Activated T-helper 1 cell treated with anti-CD3 and anti-CD28 coated beads, Interleukin-12 subunit alpha, Interleukin-12 subunit beta, Interleukin-2, Interleukin-4 antibody, amounts not matched to agents 30 ng/mL and 10 ng/mL and 1 ng/mL, durations not matched to agents 14 hours and 24 hours and 36 hours (primary cell): ENCODE measurements at regions of chrX and their contacts with region 1.

Region 1: GRCh38 chrX:124388562-124388961 is 42.2 kb downstream of the SH2D1A start:
- DNase-seq: peak; percentile 23
- H3K4me3 Mint-ChIP-seq: no peak overlapping the region
- H3K27ac Mint-ChIP-seq: no peak overlapping the region
- H3K4me1 Mint-ChIP-seq: peaks cover 5% of the 10 kb centered on the region
- H3K27me3 Mint-ChIP-seq: no peaks in the 10 kb centered on the region

Region 2: DNA sequence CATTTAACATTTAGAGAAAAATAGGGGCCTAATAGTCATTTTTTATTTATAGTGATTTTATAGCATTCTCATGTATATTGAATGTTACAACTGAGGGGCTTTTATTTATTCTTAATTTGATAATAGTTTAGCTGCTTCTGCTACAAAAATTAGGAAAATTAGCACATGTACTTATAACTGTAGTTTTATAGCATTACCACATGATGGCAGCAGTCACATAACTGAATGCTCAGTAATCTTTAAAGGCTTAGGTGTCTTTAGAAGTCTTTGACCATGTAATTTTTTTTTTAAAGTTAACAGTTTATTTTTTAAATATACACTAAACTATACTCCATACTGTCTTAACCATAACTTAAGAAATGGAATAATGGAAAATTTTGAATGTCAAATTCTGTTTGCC is 290.5 kb before region 1 on chrX:
- intact Hi-C with region 1: loop called (anchors 10 kb)
- DNase-seq: no peak
- H3K4me3 Mint-ChIP-seq: no peak overlapping the region
- H3K27ac Mint-ChIP-seq: no peak overlapping the region
- H3K4me1 Mint-ChIP-seq: no peaks in the 10 kb centered on the region
- H3K27me3 Mint-ChIP-seq: no peaks in the 10 kb centered on the region

Region 3: DNA sequence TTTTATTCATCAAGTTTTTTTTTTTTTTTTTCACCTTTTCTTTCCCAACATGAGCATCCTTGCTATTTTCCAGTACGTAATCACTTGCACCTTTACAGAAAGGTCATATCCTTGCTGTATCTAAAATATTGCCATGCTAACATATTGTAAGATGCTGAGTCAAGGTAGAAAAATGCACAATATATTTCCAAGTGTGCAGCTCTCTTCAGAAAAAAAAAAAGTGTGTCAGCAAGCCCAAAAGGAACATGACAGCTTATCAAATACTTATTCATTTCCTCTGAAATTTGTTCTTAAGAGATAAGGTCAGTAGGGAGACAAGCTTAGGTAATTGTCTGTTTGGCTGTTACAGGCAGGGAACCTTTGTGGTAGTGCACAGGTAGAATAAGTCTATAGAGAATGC is 15.2 kb before region 1 on chrX:
- intact Hi-C with region 1: no loop called
- DNase-seq: no peak
- H3K4me3 Mint-ChIP-seq: no peak overlapping the region
- H3K27ac Mint-ChIP-seq: no peak overlapping the region
- H3K4me1 Mint-ChIP-seq: peaks cover 15% of the 10 kb centered on the region
- H3K27me3 Mint-ChIP-seq: no peaks in the 10 kb centered on the region

Region 4: DNA sequence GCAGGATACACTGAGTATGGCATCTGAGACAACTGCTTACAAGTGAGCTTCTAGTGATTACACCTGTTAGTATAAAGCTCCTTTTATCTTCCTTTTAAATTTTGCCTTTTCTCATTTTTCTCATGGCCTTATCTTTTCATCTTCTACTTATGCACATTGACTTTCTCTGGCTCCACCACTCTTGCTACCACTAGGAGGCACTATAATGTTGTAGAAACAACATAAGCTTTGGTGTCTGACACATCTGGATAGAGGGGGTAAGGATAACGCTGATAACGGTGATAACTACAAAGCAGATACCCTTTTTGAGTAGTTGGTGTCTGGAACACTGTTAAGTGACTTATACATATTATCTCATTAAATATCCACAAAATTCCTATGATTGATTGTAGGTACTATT is 743.7 kb after region 1 on chrX:
- intact Hi-C with region 1: loop called (anchors 1 kb)
- DNase-seq: no peak
- H3K4me3 Mint-ChIP-seq: no peak overlapping the region
- H3K27ac Mint-ChIP-seq: no peak overlapping the region
- H3K4me1 Mint-ChIP-seq: no peaks in the 10 kb centered on the region
- H3K27me3 Mint-ChIP-seq: no peaks in the 10 kb centered on the region